CD8-positive, alpha-beta T cell (primary cell): ENCODE measurements at regions of chr7 and their contacts with region 1.

Region 1: DNA sequence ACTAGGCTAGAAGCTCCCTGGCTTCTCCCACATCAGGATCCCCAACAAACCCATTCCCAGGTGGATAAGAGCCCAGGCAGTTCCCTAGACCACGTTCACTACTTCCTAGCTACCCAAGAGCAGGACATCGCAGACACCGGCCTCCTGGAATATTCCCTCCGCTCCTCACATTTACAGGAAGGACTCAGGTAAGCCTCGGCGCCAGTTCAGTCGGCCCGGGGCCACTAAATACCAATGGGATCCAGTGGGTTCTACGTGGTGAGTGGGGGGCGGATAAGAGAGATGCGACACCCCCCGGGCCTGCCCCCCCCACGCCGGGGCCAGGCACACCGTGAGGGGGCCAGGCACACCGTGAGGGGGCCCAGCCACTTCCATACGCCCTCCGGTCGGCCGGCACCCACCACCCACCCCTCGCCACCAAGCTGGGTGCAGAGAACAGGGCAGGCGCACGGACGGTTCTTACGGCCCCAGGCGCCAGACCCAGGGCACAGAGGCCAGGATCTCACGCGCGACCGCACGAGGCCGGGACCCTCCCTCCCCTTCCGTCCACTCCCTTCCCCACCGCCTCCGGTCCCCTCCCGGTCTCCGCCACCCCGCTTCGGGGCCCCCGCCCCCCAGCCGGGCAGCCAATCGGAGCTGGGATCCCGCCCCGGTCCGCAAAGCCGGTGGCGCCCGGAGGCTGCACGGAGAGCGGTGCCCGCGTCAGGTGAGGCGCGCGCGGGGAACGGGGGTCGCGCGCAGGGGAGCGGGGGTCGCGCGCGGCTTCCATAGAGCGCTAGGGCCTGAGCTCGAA is at the start of gene BLVRA:
- DNase-seq: peak; percentile 30 to 76 (median 63)
- ATAC-seq: peak; percentile 72
- H3K4me3 ChIP-seq: peak within 1 kb of the TSS; percentile 62 to 90
- H3K4me3 Mint-ChIP-seq: peak within 1 kb of the TSS; percentile 90
- H3K27ac ChIP-seq: peak within 1 kb of the TSS; percentile 18 to 74
- H3K27ac Mint-ChIP-seq: peak within 1 kb of the TSS; percentile 80
- H3K4me1 ChIP-seq: peaks cover 15% of the 10 kb centered on the region
- H3K4me1 Mint-ChIP-seq: peaks cover 27% of the 10 kb centered on the region
- H3K27me3 ChIP-seq: no peaks in the 10 kb centered on the region
- H3K27me3 Mint-ChIP-seq: no peaks in the 10 kb centered on the region
- CTCF ChIP-seq: no peak
- total RNA-seq, gene BLVRA: 12.8 to 14.6 TPM

Region 2: GRCh38 chr7:43729214-43729923 is 28.9 kb before region 1 on chr7 and contains the start of gene COA1:
- CTCF ChIA-PET with region 1: interaction called, 4 read pairs
- POLR2A ChIA-PET with region 1: interaction called, 6 read pairs
- intact Hi-C with region 1: loop called (anchors 1 to 2 kb)
- DNase-seq: peak; percentile 61 to 93 (median 81)
- ATAC-seq: peak; percentile 92
- H3K4me3 ChIP-seq: peak within 1 kb of the TSS; percentile 81 to 89
- H3K4me3 Mint-ChIP-seq: peak within 1 kb of the TSS; percentile 93
- H3K27ac ChIP-seq: peak within 1 kb of the TSS; percentile 70 to 74
- H3K27ac Mint-ChIP-seq: peak within 1 kb of the TSS; percentile 90
- H3K4me1 ChIP-seq: peaks cover 31% of the 10 kb centered on the region
- H3K4me1 Mint-ChIP-seq: peaks cover 42% of the 10 kb centered on the region
- H3K27me3 ChIP-seq: no peaks in the 10 kb centered on the region
- H3K27me3 Mint-ChIP-seq: no peaks in the 10 kb centered on the region
- CTCF ChIP-seq: no peak
- total RNA-seq, gene COA1: 95.8 to 96.7 TPM

Region 3: DNA sequence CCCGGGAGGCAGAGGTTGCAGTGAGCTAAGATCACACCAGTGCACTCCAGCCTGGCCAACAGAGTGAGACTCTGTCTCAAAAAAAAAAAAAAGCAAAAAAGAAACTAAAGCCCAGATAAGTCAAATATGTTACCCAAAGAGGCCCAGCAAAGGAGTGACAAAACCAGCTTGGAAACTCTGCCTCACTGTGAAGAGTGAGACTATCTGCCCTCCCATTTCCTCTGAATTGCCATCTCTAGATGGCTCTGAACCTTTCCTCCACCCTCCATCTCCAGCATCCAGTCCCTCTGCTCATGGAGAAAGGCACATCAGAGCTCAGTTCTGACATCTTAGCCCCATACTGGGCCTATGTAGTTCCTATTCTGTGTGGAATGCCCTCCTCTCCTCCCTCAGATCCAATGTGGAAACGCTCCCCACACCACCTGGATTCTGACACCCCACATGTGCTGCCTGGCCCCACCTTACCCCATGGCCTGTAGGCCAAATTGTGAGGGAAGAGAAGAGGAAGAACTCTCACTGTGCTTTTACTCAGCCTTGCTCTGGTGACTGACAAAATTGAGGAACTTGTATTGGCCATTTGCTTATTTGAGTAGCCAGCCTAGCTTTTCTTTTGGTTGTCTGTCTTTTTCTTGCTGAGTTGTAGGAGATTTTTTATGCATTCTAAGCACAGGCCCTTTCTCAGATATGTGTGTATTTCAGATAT is 750.3 kb after region 1 on chr7:
- CTCF ChIA-PET with region 1: no interaction called
- POLR2A ChIA-PET with region 1: no interaction called
- intact Hi-C with region 1: no loop called
- DNase-seq: no peak
- ATAC-seq: no peak
- H3K4me3 ChIP-seq: no peak overlapping the region
- H3K4me3 Mint-ChIP-seq: no peak overlapping the region
- H3K27ac ChIP-seq: no peak overlapping the region
- H3K27ac Mint-ChIP-seq: no peak overlapping the region
- H3K4me1 ChIP-seq: no peaks in the 10 kb centered on the region
- H3K4me1 Mint-ChIP-seq: no peaks in the 10 kb centered on the region
- H3K27me3 ChIP-seq: no peaks in the 10 kb centered on the region
- H3K27me3 Mint-ChIP-seq: peaks cover 14% of the 10 kb centered on the region
- CTCF ChIP-seq: no peak